A673 (cell line): ENCODE measurements at regions of chr19 and their contacts with region 1.

Region 1: GRCh38 chr19:1987197-1988187 is 28.0 kb downstream of the BTBD2 start:
- DNase-seq: no peak
- H3K4me3 ChIP-seq: no peak overlapping the region
- H3K27ac ChIP-seq: no peak overlapping the region
- H3K4me1 ChIP-seq: no peaks in the 10 kb centered on the region
- H3K27me3 ChIP-seq: no peaks in the 10 kb centered on the region
- CTCF ChIP-seq: no peak

Region 2: GRCh38 chr19:1896508-1896907 is 91.0 kb before region 1 on chr19:
- CTCF ChIA-PET with region 1: no interaction called
- POLR2A ChIA-PET with region 1: interaction called, 16 read pairs
- intact Hi-C with region 1: no loop called
- DNase-seq: no peak
- H3K4me3 ChIP-seq: no peak overlapping the region
- H3K27ac ChIP-seq: no peak overlapping the region
- H3K4me1 ChIP-seq: peaks cover 8% of the 10 kb centered on the region
- H3K27me3 ChIP-seq: no peaks in the 10 kb centered on the region
- CTCF ChIP-seq: no peak